Mammary epithelial cell (primary cell): ENCODE measurements at regions of chr4 and their contacts with region 1.

Region 1: DNA sequence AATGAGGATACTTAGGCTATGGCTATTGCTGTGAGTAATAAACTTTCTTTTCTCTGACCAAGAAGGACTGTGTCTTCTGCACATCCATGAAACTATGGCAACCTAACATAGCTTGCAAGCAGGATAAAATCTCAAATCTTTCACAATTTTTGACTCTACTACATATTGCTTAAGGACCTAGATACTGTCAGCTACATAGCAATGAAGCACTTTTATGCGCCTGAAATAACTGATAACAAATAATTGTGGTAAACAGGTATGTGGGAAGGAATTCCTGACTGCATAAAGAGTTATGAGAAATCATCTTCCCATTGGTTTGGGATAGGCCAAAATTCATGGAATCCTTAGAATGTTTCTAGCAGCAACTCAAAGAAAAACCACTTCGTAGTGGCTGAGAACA is 41.2 kb upstream of the PDGFC start:
- DNase-seq: peak; percentile 44
- H3K4me3 ChIP-seq: no peak overlapping the region
- H3K27ac ChIP-seq: peak overlapping the region; percentile 43
- H3K4me1 ChIP-seq: peaks cover 29% of the 10 kb centered on the region
- H3K27me3 ChIP-seq: no peaks in the 10 kb centered on the region
- CTCF ChIP-seq: no peak

Region 2: DNA sequence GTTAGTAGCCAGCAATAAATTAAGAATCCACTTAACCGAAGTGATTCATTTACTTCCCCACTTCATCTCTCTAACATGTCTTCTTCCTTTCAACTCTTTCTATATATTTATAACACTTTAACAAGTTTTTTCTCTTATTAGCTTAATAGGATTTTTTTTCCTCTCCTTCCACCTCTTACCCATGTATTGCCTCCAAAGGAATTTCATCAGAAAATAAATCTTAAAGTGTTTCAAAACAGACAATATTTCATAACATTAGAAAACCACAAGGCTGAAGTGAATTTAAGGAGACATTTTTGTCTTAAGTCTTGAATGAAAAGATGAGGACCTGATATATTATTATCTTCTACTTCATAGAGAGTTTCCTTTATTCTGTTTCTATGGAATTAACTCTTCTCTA is 142.7 kb before region 1 on chr4:
- CTCF ChIA-PET with region 1: no interaction called
- dilution Hi-C with region 1: no loop called
- in situ Hi-C with region 1: no loop called
- intact Hi-C with region 1: no loop called
- DNase-seq: no peak
- H3K4me3 ChIP-seq: no peak overlapping the region
- H3K27ac ChIP-seq: no peak overlapping the region
- H3K4me1 ChIP-seq: no peaks in the 10 kb centered on the region
- H3K27me3 ChIP-seq: no peaks in the 10 kb centered on the region
- CTCF ChIP-seq: no peak

Region 3: GRCh38 chr4:156999175-156999516 is 13.6 kb before region 1 on chr4:
- CTCF ChIA-PET with region 1: interaction called, 3 read pairs
- dilution Hi-C with region 1: no loop called
- in situ Hi-C with region 1: no loop called
- intact Hi-C with region 1: loop called (anchors 1 kb)
- DNase-seq: peak; percentile 94
- H3K4me3 ChIP-seq: no peak overlapping the region
- H3K27ac ChIP-seq: peak overlapping the region; percentile 51
- H3K4me1 ChIP-seq: peaks cover 27% of the 10 kb centered on the region
- H3K27me3 ChIP-seq: no peaks in the 10 kb centered on the region
- CTCF ChIP-seq: no peak